ENCODE measurements at regions of chr3 and their contacts with region 1.

Region 1: GRCh38 chr3:185824476-185825378 is at the start of gene IGF2BP2:
- DNase-seq: peak; percentile 74
- ATAC-seq: peak; percentile 78
- H3K4me3 ChIP-seq: peak within 1 kb of the TSS; percentile 92 to 99 (median 95)
- H3K27ac ChIP-seq: peak within 1 kb of the TSS; percentile 97
- H3K4me1 ChIP-seq: peaks cover 45% of the 10 kb centered on the region
- H3K27me3 ChIP-seq: no peaks in the 10 kb centered on the region; a peak in 1 of 5 replicates
- CTCF ChIP-seq: peak; percentile 31; the same call in 1 of the 2 replicates
- EP300 ChIP-seq: peak in 1 of 2 experiments; percentile 27; a peak in 1 of 4 replicates
- POLR2A ChIP-seq: peak; percentile 78 to 81
- RAD21 ChIP-seq: peak; percentile 20
- total RNA-seq, gene IGF2BP2: 46.0 and 46.3 TPM in 2 replicates

Region 2: DNA sequence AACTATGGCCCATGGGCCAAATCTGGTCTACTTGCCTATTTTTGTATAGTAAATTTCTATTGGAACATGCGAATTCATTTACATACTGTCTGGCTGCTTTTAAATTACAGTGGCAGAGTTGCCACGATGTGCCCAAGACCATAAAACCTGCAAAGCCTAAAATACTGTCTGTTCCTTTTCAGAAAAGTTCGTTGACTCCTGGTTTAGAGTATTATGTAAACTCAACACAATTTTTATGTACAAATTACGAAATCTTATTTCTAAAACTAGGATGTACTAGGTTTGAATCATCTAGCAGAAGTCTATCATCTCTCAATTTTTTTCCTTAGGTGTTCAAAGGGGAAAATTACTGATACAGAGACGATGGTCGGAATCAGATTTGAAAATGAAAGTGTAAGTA is 211.7 kb before region 1 on chr3:
- CTCF ChIA-PET with region 1: no interaction called
- POLR2A ChIA-PET with region 1: no interaction called
- in situ Hi-C with region 1: no loop called
- intact Hi-C with region 1: no loop called
- DNase-seq: no peak
- ATAC-seq: no peak
- H3K4me3 ChIP-seq: no peak overlapping the region
- H3K27ac ChIP-seq: no peak overlapping the region
- H3K4me1 ChIP-seq: no peaks in the 10 kb centered on the region
- H3K27me3 ChIP-seq: no peaks in the 10 kb centered on the region
- CTCF ChIP-seq: no peak
- EP300 ChIP-seq: no peak
- POLR2A ChIP-seq: no peak
- RAD21 ChIP-seq: no peak

Region 3: DNA sequence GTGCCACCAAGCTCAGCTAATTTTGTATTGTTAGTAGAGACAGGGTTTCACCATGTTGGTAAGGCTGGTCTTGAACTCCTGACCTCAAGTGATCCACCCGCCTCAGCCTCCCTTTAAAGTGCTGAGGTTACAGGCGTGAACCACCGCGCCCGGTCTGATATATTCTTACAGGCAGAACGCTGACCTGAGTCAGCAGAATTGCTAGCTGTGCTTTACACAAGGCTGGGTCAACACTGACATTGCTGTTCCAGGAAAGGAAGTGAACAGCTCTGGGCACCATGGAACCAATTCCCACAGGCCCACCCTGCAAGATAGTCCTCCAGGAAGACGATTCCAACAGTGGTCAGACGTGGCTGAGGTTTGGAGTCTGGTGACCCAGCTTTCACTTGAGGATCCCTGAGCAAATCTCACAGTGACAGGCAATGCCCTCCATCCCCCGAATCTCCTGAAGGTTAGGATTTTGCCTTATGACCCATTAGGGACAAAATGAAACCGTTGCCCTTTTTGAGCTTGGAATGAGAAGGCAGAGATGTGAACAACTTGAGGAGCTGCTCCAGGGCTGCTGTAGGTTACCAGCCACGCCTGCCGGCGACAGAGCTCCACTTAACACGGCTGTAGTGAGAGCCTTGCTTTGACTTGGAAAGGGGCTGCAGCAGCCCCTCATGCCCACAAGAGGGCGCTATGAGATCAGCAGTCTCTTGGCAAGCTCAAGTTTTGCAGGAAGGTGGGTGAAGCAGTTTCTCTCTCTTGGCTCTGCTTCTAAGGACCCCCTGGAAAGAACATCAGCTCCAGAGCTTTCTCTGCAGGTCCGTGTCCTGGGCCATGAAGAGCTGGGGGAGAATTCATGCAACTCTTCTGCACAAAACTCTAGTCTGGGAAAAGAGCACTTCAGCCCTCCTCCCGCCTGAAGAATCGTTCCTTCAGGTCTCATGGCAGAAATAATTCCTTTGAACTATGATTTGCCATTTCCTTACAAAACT is 164.5 kb before region 1 on chr3:
- CTCF ChIA-PET with region 1: no interaction called
- POLR2A ChIA-PET with region 1: interaction called, 3 read pairs
- in situ Hi-C with region 1: no loop called
- intact Hi-C with region 1: loop called (anchors 2 kb)
- DNase-seq: peak; percentile 72
- ATAC-seq: peak; percentile 80
- H3K4me3 ChIP-seq: no peak overlapping the region
- H3K27ac ChIP-seq: no peak overlapping the region
- H3K4me1 ChIP-seq: no peaks in the 10 kb centered on the region
- H3K27me3 ChIP-seq: no peaks in the 10 kb centered on the region
- CTCF ChIP-seq: peak; percentile 92
- EP300 ChIP-seq: no peak
- POLR2A ChIP-seq: no peak
- RAD21 ChIP-seq: peak; percentile 80

Region 4: GRCh38 chr3:185687271-185687878 is 137.4 kb before region 1 on chr3:
- CTCF ChIA-PET with region 1: no interaction called
- POLR2A ChIA-PET with region 1: no interaction called
- in situ Hi-C with region 1: no loop called
- intact Hi-C with region 1: no loop called
- DNase-seq: no peak
- ATAC-seq: no peak
- H3K4me3 ChIP-seq: no peak overlapping the region
- H3K27ac ChIP-seq: no peak overlapping the region
- H3K4me1 ChIP-seq: no peaks in the 10 kb centered on the region
- H3K27me3 ChIP-seq: no peaks in the 10 kb centered on the region
- CTCF ChIP-seq: no peak
- EP300 ChIP-seq: no peak
- POLR2A ChIP-seq: no peak
- RAD21 ChIP-seq: no peak

Region 5: DNA sequence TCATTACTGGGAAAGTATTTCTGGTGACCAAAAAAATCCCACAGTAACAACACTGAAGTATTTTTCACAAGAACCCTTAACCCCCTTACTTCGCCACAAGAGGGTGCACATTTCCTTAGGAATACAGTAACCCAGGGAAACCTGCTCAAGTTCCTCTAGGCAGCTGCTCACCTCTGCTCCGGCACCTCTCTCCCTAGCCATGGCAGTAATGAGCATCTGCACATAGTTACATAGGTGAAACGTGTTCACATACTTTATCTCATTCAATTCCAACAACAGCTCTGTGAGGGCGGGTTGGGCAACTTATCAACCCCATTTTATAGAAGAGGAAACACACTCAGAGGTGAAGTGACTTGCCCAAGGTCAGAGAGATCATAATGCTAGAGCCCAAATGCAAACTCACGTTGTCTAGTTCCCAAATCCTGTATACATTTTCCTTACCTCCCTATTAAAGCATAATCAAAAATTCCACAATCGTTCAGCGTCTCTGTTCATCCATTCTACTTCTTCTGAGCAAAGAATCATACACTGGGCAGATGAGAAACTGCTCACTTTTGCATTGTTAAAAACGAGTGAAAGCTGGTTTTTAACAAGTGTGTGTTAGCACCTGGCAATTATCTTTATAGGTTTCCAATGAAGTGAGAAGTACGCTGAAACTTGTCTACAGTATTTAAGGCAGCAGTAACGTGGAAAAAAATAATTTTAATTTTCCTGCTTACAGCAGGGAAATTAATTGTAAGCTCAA is 90.6 kb before region 1 on chr3:
- CTCF ChIA-PET with region 1: no interaction called
- POLR2A ChIA-PET with region 1: no interaction called
- in situ Hi-C with region 1: no loop called
- intact Hi-C with region 1: loop called (anchors 5 kb)
- DNase-seq: peak; percentile 63
- ATAC-seq: peak; percentile 82
- H3K4me3 ChIP-seq: no peak overlapping the region
- H3K27ac ChIP-seq: no peak overlapping the region
- H3K4me1 ChIP-seq: peaks cover 51% of the 10 kb centered on the region
- H3K27me3 ChIP-seq: no peaks in the 10 kb centered on the region
- CTCF ChIP-seq: peak; percentile 70
- EP300 ChIP-seq: no peak
- POLR2A ChIP-seq: no peak
- RAD21 ChIP-seq: peak; percentile 32; the same call in 1 of the 2 replicates

Region 6: DNA sequence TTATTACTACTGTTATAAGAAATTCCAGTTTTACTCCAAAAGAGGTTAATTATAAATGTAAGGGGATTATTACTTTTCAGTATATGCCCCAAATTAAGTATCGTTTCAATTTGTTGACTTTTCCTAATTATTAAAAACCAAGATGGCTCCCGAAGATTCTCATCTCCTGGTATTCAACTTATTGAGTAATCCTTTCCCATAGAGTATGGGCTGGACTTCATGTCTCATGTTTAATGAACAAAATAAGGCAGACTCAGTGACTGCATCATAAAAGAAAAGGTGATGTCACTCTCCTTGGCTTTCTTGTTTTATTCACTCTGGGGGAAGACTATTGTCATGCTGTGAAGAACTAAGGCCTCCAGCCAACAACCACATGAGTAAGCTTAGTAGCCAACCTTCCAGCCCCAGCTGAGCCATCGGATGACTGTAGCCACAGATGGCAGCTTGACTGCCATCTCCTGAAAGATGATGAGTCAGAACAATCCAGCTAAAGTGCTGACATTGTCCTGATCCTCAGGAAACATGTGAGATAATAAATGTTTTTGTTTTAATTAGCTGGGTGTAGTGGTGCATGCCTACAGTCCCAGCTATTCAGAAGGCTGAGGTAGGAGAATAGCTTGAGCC is 17.2 kb before region 1 on chr3:
- CTCF ChIA-PET with region 1: no interaction called
- POLR2A ChIA-PET with region 1: interaction called, 11 read pairs
- in situ Hi-C with region 1: no loop called
- intact Hi-C with region 1: no loop called
- DNase-seq: no peak
- ATAC-seq: no peak
- H3K4me3 ChIP-seq: no peak overlapping the region
- H3K27ac ChIP-seq: no peak overlapping the region
- H3K4me1 ChIP-seq: peaks cover 18% of the 10 kb centered on the region
- H3K27me3 ChIP-seq: no peaks in the 10 kb centered on the region
- CTCF ChIP-seq: no peak
- EP300 ChIP-seq: no peak
- POLR2A ChIP-seq: no peak
- RAD21 ChIP-seq: no peak

Region 7: GRCh38 chr3:185858502-185859225 is 33.9 kb after region 1 on chr3:
- CTCF ChIA-PET with region 1: no interaction called
- POLR2A ChIA-PET with region 1: interaction called, 11 read pairs
- in situ Hi-C with region 1: no loop called
- intact Hi-C with region 1: no loop called
- DNase-seq: peak; percentile 94
- ATAC-seq: peak; percentile 90
- H3K4me3 ChIP-seq: no peak overlapping the region; a peak in 1 of 6 replicates
- H3K27ac ChIP-seq: peak overlapping the region; percentile 65
- H3K4me1 ChIP-seq: peaks cover 34% of the 10 kb centered on the region
- H3K27me3 ChIP-seq: no peaks in the 10 kb centered on the region
- CTCF ChIP-seq: no peak
- EP300 ChIP-seq: peak; percentile 68 to 95; a peak in 2 of 4 replicates
- POLR2A ChIP-seq: no peak
- RAD21 ChIP-seq: no peak

Region 8: GRCh38 chr3:185912929-185913901 is 88.5 kb after region 1 on chr3:
- CTCF ChIA-PET with region 1: no interaction called
- POLR2A ChIA-PET with region 1: no interaction called
- in situ Hi-C with region 1: no loop called
- intact Hi-C with region 1: loop called (anchors 5 kb)
- DNase-seq: no peak
- ATAC-seq: peak; percentile 0
- H3K4me3 ChIP-seq: no peak overlapping the region
- H3K27ac ChIP-seq: no peak overlapping the region
- H3K4me1 ChIP-seq: no peaks in the 10 kb centered on the region
- H3K27me3 ChIP-seq: no peaks in the 10 kb centered on the region
- CTCF ChIP-seq: no peak
- EP300 ChIP-seq: no peak
- POLR2A ChIP-seq: peak; percentile 15 to 49; a peak in 1 of 4 replicates
- RAD21 ChIP-seq: no peak

Region 9: DNA sequence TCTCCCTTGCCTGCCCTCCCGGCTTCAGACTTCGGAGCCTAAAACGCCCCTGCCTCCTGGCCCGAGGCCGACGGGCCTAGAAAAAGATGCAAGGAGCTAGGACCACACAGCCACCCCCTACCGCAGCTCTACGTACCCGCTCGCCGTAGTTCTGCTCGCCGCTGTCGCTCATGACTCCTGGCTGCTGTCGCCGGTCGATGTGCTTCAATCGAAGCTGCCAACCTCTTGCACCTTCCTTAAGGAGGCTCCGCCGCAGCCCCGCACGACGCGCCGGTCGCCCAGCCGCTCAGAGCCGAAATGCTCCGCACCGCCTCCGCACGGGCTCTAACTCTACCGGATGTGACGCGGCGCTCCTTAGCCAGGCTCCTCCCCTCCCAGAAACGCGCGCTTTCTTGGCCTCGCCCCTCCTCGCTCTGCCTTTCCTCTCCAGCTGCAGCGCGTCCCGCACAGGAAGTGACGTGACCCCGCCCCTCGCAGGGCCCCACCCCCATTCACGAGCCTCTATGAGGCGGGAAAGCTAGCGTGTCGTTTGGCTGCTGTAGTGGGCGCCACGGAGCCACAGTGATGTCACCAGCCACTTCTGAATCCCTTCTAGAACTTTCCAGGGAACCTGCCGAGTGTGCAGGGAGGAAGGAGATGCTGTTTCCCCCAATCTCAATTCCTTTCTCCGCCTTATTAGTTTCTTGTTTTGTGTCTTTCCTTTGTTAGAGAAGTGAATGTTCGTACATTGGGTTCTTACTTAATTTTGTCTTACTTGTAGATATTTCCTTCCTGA is 113.1 kb after region 1 on chr3 and contains the start of gene TRA2B:
- CTCF ChIA-PET with region 1: no interaction called
- POLR2A ChIA-PET with region 1: interaction called, 11 read pairs
- in situ Hi-C with region 1: no loop called
- intact Hi-C with region 1: loop called (anchors 1 kb)
- DNase-seq: peak; percentile 93
- ATAC-seq: peak; percentile 92
- H3K4me3 ChIP-seq: peak within 1 kb of the TSS; percentile 85 to 97 (median 95)
- H3K27ac ChIP-seq: peak within 1 kb of the TSS; percentile 96
- H3K4me1 ChIP-seq: peaks cover 29% of the 10 kb centered on the region
- H3K27me3 ChIP-seq: no peaks in the 10 kb centered on the region; a peak in 1 of 5 replicates
- CTCF ChIP-seq: peak; percentile 72
- EP300 ChIP-seq: peak; percentile 34 to 65; a peak in 3 of 4 replicates
- POLR2A ChIP-seq: peak; percentile 99 to 100
- RAD21 ChIP-seq: 0 out of 2 replicates have a peak, but pooled peaks have one; percentile 9
- total RNA-seq, gene TRA2B: 241 and 259 TPM in 2 replicates

Measured in HepG2 (cell line).